ENCODE measurements at regions of chr16 and their contacts with region 1.

Region 1: DNA sequence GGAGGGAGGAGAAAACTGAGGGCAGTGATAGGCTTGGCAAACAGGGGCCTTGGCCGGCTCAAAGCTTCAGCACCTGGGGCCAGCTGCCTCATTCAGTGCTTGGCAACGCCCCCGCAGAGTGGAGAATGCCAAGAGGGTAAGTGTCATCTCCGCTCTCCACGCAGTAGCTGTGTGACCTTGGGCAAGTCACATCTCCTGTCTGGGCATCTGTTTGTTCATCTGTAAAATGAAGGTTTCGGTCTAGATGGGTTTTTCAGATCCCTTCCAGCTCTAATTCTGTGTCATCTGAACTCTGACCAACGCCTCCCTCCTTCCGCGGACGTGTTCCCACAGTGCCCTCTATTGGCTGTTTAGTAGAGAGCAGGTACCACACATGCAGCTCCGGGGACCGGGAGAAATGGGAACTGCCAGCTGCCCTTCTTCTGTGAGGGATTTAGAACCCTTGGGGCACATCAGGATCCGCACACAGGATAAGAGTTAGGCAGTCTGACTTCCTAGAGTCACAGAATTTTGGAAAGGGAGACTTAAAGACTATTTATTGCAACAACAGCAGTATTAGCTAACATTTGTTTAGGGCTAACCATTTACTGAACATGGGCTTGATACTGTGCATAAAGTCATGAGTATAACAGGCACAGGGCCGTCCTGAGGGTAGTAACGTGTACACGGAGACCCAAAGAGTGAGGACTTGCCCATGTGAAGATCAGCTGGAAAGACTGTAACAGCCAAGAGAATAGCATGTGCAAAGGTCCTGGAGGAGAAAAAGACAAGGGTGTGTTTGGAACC is 26.8 kb downstream of the GP2 start:
- DNase-seq: no peak
- H3K4me3 ChIP-seq: no peak overlapping the region
- H3K27ac ChIP-seq: no peak overlapping the region
- H3K4me1 ChIP-seq: no peaks in the 10 kb centered on the region
- H3K27me3 ChIP-seq: peaks cover 0 to 17% (median 0%) of the 10 kb centered on the region in 4 donors
- CTCF ChIP-seq: peak in 5 of 6 experiments; percentile 42 to 75 (median 53)
- POLR2A ChIP-seq: no peak

Region 2: GRCh38 chr16:19907161-19907992 is 393.1 kb before region 1 on chr16:
- intact Hi-C with region 1: loop called (anchors 5 kb)
- DNase-seq: no peak
- H3K4me3 ChIP-seq: peak overlapping the region in 1 of 4 donors; percentile 32
- H3K27ac ChIP-seq: no peak overlapping the region
- H3K4me1 ChIP-seq: peaks cover 0 to 7% (median 3%) of the 10 kb centered on the region in 3 donors
- H3K27me3 ChIP-seq: peaks cover 0 to 25% (median 0%) of the 10 kb centered on the region in 4 donors
- CTCF ChIP-seq: peak; percentile 85 to 96 (median 89)
- POLR2A ChIP-seq: no peak

Measured in esophagus squamous epithelium (tissue), 5 donors.